ENCODE measurements at regions of chr15 and their contacts with region 1.

Region 1: DNA sequence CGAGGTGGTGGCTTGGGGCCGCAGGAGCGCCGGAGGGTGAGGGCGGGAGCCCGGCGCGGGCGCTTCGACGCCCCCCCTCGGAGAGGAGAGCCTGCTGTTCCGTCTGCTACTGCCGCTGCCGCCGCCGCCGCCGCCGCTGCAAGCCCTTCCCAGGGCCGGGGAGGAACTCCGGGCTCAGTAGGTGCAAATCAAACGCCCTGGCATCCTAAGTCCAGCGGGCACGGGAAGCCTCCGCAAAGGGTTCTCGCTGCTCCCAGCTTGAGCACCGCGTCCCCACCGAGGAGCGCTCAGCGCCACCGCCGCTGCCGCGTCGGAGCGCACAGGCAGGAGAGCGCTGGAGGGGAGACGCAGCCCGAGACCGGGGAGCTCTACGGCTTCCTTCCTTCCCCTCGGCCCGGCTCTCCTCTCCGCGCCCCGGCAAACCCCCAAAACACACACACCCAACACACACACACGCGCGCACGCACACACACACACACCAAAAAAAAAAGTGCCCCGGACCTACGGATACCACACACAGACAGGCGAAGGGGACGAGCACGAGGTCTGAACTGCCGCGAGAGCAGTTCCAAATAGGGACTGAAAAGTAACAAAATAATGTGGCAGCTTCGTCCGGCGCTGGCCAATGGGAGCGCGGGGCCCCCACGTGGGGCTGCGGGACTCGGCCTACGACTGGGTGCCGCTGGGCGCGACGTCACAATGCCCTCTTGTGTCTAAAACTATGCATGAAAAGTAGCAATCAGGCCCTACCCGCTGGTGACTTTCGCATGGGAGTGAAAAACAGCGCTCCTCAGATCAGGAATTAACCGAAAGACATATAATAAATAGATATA is at the start of gene TLE3:
- DNase-seq: peak; percentile 96
- ATAC-seq: peak; percentile 57
- H3K4me3 ChIP-seq: peak within 1 kb of the TSS; percentile 83 to 88 (median 84)
- H3K27ac ChIP-seq: peak within 1 kb of the TSS; percentile 95
- H3K4me1 ChIP-seq: peaks cover 68% of the 10 kb centered on the region
- H3K27me3 ChIP-seq: peaks cover 2 to 10% of the 10 kb centered on the region in 2 experiments; a peak in 4 of 5 replicates
- CTCF ChIP-seq: peak; percentile 50
- EP300 ChIP-seq: no peak
- POLR2A ChIP-seq: peak; percentile 76 to 78
- RAD21 ChIP-seq: no peak; the same call in 1 of the 2 replicates
- total RNA-seq, gene TLE3: 11.9 TPM in 2 replicates

Region 2: GRCh38 chr15:69561071-69561784 is 536.3 kb before region 1 on chr15:
- CTCF ChIA-PET with region 1: no interaction called
- POLR2A ChIA-PET with region 1: interaction called, 10 read pairs
- in situ Hi-C with region 1: no loop called
- intact Hi-C with region 1: no loop called
- DNase-seq: peak; percentile 80
- ATAC-seq: peak; percentile 73
- H3K4me3 ChIP-seq: peak overlapping the region in 1 of 3 experiments; percentile 9; a peak in 1 of 6 replicates
- H3K27ac ChIP-seq: no peak overlapping the region
- H3K4me1 ChIP-seq: peaks cover 54% of the 10 kb centered on the region
- H3K27me3 ChIP-seq: peaks cover 6 to 85% of the 10 kb centered on the region in 2 experiments
- CTCF ChIP-seq: no peak
- EP300 ChIP-seq: no peak
- POLR2A ChIP-seq: no peak
- RAD21 ChIP-seq: no peak

Region 3: GRCh38 chr15:70077188-70078147 is 20.1 kb before region 1 on chr15:
- CTCF ChIA-PET with region 1: no interaction called
- POLR2A ChIA-PET with region 1: interaction called, 152 read pairs
- in situ Hi-C with region 1: no loop called
- intact Hi-C with region 1: loop called (anchors 1 kb)
- DNase-seq: no peak
- ATAC-seq: no peak
- H3K4me3 ChIP-seq: no peak overlapping the region
- H3K27ac ChIP-seq: peak overlapping the region; percentile 90
- H3K4me1 ChIP-seq: peaks cover 48% of the 10 kb centered on the region
- H3K27me3 ChIP-seq: no peaks in the 10 kb centered on the region
- CTCF ChIP-seq: no peak
- EP300 ChIP-seq: no peak
- POLR2A ChIP-seq: no peak
- RAD21 ChIP-seq: no peak

Region 4: GRCh38 chr15:70127288-70127746 is 29.8 kb after region 1 on chr15:
- CTCF ChIA-PET with region 1: no interaction called
- POLR2A ChIA-PET with region 1: interaction called, 10 read pairs
- in situ Hi-C with region 1: no loop called
- intact Hi-C with region 1: no loop called
- DNase-seq: peak; percentile 87
- ATAC-seq: peak; percentile 74
- H3K4me3 ChIP-seq: no peak overlapping the region
- H3K27ac ChIP-seq: peak overlapping the region; percentile 19
- H3K4me1 ChIP-seq: peaks cover 55% of the 10 kb centered on the region
- H3K27me3 ChIP-seq: peaks cover 2 to 74% of the 10 kb centered on the region in 2 experiments; a peak in 4 of 5 replicates
- CTCF ChIP-seq: no peak
- EP300 ChIP-seq: peak in 1 of 2 experiments; percentile 74; a peak in 2 of 4 replicates
- POLR2A ChIP-seq: no peak
- RAD21 ChIP-seq: no peak

Region 5: DNA sequence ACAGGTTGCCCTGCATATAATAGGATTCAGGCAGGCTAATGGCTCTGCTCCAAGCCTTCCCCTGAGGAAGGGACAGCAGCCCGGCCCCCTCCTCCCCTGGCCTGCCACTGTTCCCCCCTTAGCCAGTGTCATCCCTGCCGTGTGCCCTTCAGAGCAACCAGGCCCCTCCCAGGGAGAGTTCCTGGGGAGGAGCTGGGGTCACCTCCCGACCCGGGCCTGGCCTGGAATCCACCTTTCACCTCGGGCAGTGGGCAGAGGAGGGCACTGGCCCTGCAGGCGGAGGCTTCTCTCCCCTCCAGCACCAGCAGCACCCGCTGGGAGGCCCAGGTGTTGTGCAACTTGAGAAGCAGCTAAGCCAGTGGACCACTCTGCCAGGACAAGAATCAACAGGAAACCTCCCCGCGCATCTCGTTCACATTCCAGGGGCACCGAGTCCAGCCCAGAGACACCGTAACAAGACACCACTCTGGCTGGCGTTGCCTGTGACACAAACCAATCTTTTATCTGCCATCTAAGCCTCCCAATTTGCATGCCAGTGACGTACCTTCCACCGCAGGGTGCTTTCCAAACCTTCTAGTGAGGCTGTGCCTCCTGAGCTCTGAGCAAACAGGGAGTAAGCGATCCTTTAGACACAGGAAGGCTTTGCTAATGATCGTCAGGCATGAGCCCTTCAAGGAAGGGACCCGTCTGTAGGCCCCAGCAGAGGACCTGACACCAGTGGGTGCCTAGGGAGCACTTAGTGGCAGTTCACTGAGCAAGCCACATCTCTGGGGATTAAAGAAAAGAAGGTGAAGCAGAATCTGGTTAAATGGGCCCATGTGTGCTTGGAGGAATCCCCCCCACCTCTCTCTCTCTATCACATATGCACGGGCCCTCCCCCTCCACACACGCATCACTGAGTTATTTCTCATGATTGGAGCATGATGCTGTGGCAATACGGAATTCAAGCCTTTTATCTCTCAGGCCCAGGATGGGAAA is 99.0 kb after region 1 on chr15:
- CTCF ChIA-PET with region 1: no interaction called
- POLR2A ChIA-PET with region 1: interaction called, 7 read pairs
- in situ Hi-C with region 1: no loop called
- intact Hi-C with region 1: loop called (anchors 5 kb)
- DNase-seq: peak; percentile 89
- ATAC-seq: peak; percentile 76
- H3K4me3 ChIP-seq: peak overlapping the region; percentile 24 to 66 (median 28); a peak in 5 of 6 replicates
- H3K27ac ChIP-seq: peak overlapping the region; percentile 83
- H3K4me1 ChIP-seq: peaks cover 72% of the 10 kb centered on the region
- H3K27me3 ChIP-seq: peaks cover 4 to 12% of the 10 kb centered on the region in 2 experiments; a peak in 3 of 5 replicates
- CTCF ChIP-seq: no peak
- EP300 ChIP-seq: peak in 1 of 2 experiments; percentile 33; a peak in 1 of 4 replicates
- POLR2A ChIP-seq: no peak
- RAD21 ChIP-seq: no peak

Measured in HepG2 (cell line).